AG04450 (cell line): ENCODE measurements at regions of chr2 and their contacts with region 1.

Region 1: DNA sequence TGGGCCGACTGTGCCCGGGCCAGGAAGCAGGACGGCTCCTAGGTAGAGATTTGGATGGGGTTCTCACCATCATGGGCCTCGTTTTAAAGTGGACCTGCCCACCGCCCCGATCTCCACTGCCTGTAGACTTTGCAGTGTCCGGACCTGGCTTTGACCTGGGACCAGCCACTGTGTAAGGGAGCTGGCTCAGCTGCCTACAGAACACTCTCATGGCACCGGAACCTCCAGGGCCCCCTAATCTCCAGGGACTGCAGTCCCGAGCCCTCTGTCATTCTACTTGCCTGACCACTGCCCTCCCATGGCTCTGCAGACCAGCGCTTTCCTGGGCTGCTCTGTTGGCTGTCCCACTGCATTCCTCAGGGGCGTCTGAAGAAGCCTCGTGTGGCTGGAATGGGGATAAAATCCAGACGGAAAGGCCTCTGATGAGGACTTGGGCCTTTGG is 120.8 kb downstream of the GLI2 start:
- DNase-seq: no peak
- H3K4me3 ChIP-seq: no peak overlapping the region
- H3K27ac ChIP-seq: no peak overlapping the region
- H3K27me3 ChIP-seq: no peaks in the 10 kb centered on the region
- CTCF ChIP-seq: peak; percentile 57

Region 2: DNA sequence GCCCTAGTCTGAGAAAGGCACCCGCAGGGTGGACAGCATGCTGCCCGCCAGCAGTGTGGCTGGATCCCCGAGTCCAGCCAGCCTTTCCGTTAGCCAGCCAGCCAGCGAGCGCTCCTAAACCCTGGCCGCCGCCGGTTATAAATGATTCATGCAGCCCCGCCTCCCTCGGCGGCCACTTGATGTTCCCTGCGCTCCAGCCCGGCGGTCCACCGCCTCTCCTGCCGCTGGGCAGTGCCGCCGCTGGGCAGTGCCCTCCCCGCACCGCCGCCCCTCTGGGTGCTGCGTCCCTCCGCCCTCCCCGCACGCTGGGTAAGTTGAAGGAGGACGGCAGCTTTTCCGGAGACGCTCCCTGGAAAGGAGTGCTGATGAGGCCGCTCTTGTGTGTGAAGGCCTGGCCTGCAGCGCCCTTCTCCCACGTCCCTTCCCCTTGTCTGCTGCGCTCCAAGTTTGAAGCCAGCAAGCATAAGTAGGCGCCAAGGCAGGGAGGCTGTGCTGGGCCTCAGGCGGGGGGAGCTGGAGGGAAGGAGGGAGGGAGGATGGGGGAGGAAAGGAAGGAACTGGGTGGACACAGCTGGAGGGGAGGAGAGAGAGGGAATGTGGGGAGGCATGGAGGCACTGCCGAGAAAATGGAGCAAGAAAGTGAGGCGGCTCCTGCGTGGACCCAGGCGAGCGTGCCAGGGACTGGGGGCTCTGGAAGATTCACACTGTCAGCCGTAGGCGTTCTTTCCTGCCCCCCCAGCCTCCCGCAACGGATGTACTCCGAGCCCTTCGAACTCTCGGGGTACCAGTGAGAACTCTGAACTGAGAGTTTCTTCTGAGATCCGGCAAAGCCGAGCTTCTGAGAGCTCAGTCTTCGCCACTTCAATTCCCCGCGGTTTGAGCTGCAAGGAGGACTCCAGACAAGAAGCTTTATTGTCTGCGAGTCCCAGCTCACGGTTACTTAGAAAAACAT is 11.1 kb after region 1 on chr2:
- CTCF ChIA-PET with region 1: interaction called, 10 read pairs
- POLR2A ChIA-PET with region 1: no interaction called
- DNase-seq: no peak
- H3K4me3 ChIP-seq: peak overlapping the region; percentile 57
- H3K27ac ChIP-seq: peak overlapping the region; percentile 83
- H3K27me3 ChIP-seq: no peaks in the 10 kb centered on the region
- CTCF ChIP-seq: no peak